Gastrocnemius medialis (tissue), 4 donors: ENCODE measurements at regions of chr2 and their contacts with region 1.

Region 1: DNA sequence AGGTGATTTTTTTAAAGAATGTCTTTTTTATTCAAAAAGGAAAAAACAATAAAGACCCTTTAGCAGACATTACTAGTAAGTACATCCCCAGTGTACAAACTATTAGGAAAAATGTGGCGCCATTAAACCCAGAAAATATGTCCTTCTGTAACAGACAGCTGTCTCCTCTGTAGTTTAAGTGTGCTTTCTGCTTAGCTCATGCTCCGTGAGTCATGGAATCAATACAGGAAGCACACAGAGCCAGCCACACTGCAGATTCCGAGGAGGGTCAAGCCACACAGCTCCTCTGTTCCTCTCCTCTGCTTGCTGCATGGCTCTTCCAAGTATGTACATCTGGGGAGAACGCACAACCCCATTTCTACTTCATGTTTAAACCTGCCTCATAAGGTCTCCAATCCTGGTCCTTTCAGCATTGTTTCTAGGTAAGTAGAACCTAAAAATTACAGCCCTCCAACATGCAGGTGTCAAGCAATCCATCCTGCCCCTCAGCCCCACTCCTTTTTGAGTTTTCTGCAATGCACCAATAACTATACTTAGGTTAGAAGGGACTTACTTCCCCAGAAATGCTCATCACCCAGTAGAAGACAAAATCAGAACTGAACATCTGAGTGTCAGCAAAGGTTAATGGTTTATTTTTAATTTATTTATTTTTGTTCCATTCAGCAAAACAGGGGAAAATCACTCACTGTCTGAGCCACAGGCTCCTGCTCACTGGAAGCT is 37.5 kb downstream of the ACVR1 start:
- DNase-seq: peak; percentile 54 to 64
- ATAC-seq: peak; percentile 74 to 75
- H3K4me3 ChIP-seq: peak overlapping the region; percentile 50 to 62 (median 55)
- H3K27ac ChIP-seq: peak overlapping the region; percentile 83 to 91 (median 90)
- H3K4me1 ChIP-seq: peaks cover 72 to 84% of the 10 kb centered on the region in 2 donors
- H3K27me3 ChIP-seq: no peaks in the 10 kb centered on the region
- CTCF ChIP-seq: no peak
- POLR2A ChIP-seq: peak; percentile 18 to 51

Region 2: DNA sequence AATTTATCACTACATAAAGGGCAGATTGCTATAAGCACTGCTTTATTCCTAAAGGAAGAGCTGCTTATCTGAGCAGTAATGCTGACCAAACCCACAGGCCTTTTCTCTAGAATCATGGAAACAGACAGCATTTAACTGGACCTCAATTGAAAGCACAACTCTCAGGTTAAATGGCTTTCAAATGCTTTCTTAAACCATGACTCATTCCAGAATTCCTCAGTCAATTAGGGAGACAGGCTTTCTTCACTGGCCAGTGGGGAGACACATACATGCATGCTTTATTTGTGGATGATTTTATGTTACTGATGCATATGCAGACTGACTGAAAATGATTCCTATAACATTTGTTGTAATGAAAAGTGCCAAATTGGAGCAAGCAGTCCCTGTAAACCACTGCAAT is 77.1 kb before region 1 on chr2:
- in situ Hi-C with region 1: no loop called
- intact Hi-C with region 1: no loop called
- DNase-seq: no peak
- ATAC-seq: no peak
- H3K4me3 ChIP-seq: no peak overlapping the region
- H3K27ac ChIP-seq: no peak overlapping the region
- H3K4me1 ChIP-seq: no peaks in the 10 kb centered on the region
- H3K27me3 ChIP-seq: no peaks in the 10 kb centered on the region
- CTCF ChIP-seq: no peak
- POLR2A ChIP-seq: no peak

Region 3: GRCh38 chr2:157789933-157790511 is 48.6 kb before region 1 on chr2:
- in situ Hi-C with region 1: no loop called
- intact Hi-C with region 1: loop called (anchors 2 kb)
- DNase-seq: peak; percentile 92 to 94
- ATAC-seq: peak; percentile 80 to 90
- H3K4me3 ChIP-seq: peak overlapping the region; percentile 3 to 27 (median 20)
- H3K27ac ChIP-seq: peak overlapping the region; percentile 88 to 94 (median 91)
- H3K4me1 ChIP-seq: peaks cover 83 to 96% of the 10 kb centered on the region in 2 donors
- H3K27me3 ChIP-seq: no peaks in the 10 kb centered on the region
- CTCF ChIP-seq: no peak
- POLR2A ChIP-seq: no peak

Region 4: DNA sequence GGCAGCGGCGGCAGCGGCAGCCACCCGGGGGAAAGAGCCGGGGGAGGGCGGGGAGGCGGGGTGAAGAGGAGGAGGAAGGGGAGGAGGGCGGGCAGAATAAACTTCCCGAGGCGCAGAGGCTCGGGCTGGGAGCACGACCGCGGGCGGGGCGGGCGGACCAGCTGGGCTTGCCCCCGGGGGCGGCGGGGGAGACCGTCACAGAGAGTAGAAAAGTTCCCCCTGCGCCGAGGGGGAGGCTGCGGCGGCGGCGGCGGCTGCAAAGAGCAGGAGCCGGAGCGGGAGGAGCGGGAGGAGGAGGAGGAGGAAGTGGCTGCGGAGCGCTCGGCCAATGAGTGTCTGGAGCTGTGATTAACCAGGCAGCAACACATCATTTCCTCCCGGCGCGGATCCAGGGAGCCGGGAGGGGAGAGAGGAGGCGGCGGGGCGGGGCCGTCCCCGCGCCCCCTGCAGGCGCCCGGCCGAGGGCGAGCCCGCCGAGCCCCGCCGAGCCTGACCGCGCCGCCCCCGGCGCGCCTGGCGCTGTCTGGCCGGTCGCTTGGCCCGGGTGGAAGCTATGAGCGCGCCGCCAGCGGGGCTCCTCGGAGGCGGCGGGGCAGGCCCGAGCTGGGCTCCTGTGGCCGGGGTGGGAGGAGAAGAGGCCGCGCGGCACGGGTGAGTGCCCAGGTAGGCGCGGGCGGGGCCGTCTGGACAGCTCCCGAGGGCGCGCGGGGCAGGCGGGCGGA is 37.6 kb after region 1 on chr2 and contains the start of gene ACVR1:
- in situ Hi-C with region 1: no loop called
- intact Hi-C with region 1: loop called (anchors 2 kb)
- DNase-seq: peak; percentile 96 to 97
- ATAC-seq: peak; percentile 93 to 94
- H3K4me3 ChIP-seq: peak within 1 kb of the TSS; percentile 81 to 92 (median 84)
- H3K27ac ChIP-seq: peak within 1 kb of the TSS; percentile 93 to 97 (median 96)
- H3K4me1 ChIP-seq: peaks cover 41 to 45% of the 10 kb centered on the region in 2 donors
- H3K27me3 ChIP-seq: no peaks in the 10 kb centered on the region
- CTCF ChIP-seq: peak; percentile 43 to 83 (median 66)
- POLR2A ChIP-seq: peak; percentile 76 to 85
- total RNA-seq, gene ACVR1: 10.8 to 18.4 (median 12.2) TPM

Region 5: DNA sequence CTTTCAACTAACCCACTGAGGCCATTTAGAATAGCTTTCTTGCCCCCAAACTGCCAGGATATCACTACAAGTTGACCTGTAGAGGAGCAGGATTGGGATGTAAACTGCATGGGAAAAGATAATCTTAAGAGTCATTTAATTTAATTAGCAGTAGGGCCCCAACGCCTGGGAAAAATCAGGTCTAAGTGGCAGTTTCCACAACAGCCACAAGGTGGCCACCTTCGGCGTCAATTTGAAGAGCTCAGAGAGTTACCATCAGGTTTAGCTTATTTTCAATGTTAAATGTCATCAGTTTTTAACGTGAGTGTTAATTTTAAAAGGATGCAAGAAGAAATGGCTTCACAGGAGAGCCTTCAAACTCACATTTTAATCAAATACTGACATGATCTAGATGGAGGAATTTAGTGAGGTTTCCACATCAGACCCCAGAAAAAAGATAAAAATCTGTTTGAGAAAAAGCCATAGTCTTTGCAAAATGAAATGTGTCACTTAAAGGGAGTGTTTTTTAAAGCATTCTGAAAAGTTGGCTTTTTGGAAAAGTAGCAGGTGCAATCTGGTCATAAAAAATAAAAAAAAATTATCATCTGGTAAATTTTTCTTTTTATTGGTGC is 185.8 kb after region 1 on chr2:
- in situ Hi-C with region 1: no loop called
- intact Hi-C with region 1: no loop called
- DNase-seq: no peak
- ATAC-seq: peak in 1 of 2 donors; percentile 66
- H3K4me3 ChIP-seq: no peak overlapping the region
- H3K27ac ChIP-seq: no peak overlapping the region
- H3K4me1 ChIP-seq: no peaks in the 10 kb centered on the region
- H3K27me3 ChIP-seq: no peaks in the 10 kb centered on the region
- CTCF ChIP-seq: peak; percentile 41 to 81 (median 56)
- POLR2A ChIP-seq: no peak

Region 6: DNA sequence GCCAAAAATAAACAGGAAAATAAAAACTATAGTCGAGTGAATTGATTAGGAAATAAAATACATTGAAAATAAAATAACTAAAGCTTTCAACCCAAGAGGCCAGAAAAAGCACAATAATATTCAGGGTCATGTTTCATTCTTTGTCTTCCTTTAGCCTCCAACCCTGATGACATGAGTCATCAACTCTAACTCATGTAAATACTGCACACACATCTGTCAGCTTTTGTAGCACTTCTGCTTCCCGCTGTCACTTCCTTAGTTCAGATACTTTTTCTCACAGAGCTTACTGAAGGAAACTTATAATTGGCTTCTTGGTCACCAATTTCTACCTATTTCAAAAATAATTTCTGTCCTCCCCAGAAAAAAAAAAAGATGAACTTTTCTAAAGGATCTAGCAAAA is 375.8 kb after region 1 on chr2:
- in situ Hi-C with region 1: no loop called
- intact Hi-C with region 1: no loop called
- DNase-seq: no peak
- ATAC-seq: peak in 1 of 2 donors; percentile 42
- H3K4me3 ChIP-seq: no peak overlapping the region
- H3K27ac ChIP-seq: no peak overlapping the region
- H3K4me1 ChIP-seq: no peaks in the 10 kb centered on the region
- H3K27me3 ChIP-seq: no peaks in the 10 kb centered on the region
- CTCF ChIP-seq: no peak
- POLR2A ChIP-seq: no peak